Activated CD4-positive, alpha-beta T cell treated with anti-CD3 and anti-CD28 coated beads for 36 hours (primary cell): ENCODE measurements at regions of chr16 and their contacts with region 1.

Region 1: DNA sequence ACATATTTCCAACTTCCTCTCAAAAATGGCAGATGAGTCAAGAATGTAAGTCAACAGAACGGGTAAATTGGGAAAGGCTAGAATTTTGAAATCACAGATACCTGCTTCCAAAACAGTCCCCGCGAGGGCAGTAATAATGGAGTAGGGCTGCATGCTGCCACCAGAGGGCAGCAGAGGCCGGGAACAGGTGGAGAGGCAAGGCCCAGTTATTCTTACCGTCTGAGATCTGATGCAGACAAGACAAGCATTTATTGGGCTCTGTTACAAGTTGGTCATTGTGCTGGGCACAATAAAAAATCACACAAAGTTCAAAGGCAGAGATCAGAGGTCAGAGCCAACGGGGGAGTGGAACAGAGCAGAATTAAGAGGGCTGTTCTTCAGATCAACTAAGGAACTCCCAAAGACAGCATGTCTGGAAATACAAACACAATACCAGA is 8.8 kb upstream of the MLKL start:
- DNase-seq: peak; percentile 90
- ATAC-seq: peak; percentile 99
- H3K4me3 Mint-ChIP-seq: no peak overlapping the region
- H3K27ac Mint-ChIP-seq: no peak overlapping the region
- H3K4me1 Mint-ChIP-seq: peaks cover 6% of the 10 kb centered on the region
- H3K27me3 Mint-ChIP-seq: no peaks in the 10 kb centered on the region

Region 2: DNA sequence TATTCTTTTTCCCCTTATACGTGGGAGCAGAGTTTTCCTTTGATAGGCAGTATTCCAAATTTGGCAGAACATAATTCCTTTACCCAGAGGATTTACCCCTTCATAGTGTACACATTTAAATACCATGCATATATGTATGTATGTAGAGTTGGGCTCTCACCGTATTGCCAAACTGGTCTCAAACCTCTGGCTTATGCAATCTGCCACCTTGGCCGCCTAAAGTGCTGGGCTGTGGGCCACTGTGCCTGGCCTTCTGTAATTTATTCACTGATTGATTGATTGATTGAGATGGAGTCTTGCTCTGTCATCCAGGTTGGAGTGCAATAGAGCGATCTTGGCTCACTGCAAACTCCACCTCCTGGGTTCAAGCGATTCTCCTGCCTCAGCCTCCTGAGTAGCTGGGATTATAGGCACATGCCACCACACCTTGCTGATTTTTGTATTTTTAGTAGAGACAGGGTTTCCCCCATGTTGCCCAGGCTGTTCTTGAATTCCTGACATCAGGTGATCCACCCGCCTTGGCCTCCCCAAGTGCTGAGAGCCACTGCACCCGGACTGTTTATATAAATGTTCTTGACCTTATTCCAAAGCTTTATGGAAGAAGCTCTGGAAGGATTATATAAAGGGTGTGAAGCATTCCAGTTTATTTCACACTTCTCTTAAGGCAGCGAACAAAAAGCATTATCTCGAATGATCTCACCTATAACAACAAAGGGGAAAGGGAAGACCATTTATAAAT is 117.4 kb before region 1 on chr16:
- CTCF ChIA-PET with region 1: no interaction called
- POLR2A ChIA-PET with region 1: no interaction called
- intact Hi-C with region 1: no loop called
- DNase-seq: no peak
- ATAC-seq: no peak
- H3K4me3 Mint-ChIP-seq: no peak overlapping the region
- H3K27ac Mint-ChIP-seq: no peak overlapping the region
- H3K4me1 Mint-ChIP-seq: peaks cover 60% of the 10 kb centered on the region
- H3K27me3 Mint-ChIP-seq: no peaks in the 10 kb centered on the region

Region 3: DNA sequence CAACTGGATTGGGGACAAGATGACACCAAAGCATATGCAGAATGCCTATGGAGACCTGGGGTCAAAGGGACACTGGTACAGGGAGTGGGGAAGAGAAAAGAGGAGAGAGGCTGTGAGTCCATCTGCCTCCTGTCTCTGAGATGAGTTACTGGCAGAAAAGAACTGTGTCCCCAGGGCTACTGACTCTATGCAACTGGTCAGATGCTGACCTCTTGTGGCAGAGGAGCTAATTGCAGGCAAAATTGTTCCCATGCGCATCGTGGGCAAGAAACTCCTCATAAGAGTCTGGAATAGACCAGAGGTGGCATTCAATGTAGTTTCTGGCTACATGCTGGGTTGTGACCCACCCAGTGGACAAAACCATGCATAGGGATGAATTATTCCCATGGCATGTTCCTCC is 17.3 kb after region 1 on chr16:
- CTCF ChIA-PET with region 1: interaction called, 38 read pairs
- POLR2A ChIA-PET with region 1: no interaction called
- intact Hi-C with region 1: loop called (anchors 1 kb)
- DNase-seq: peak; percentile 70
- ATAC-seq: peak; percentile 65
- H3K4me3 Mint-ChIP-seq: no peak overlapping the region
- H3K27ac Mint-ChIP-seq: no peak overlapping the region
- H3K4me1 Mint-ChIP-seq: peaks cover 12% of the 10 kb centered on the region
- H3K27me3 Mint-ChIP-seq: no peaks in the 10 kb centered on the region

Region 4: GRCh38 chr16:74813109-74813641 is 103.7 kb after region 1 on chr16:
- CTCF ChIA-PET with region 1: interaction called, 5 read pairs
- POLR2A ChIA-PET with region 1: no interaction called
- intact Hi-C with region 1: loop called in 1 of 2 experiments (anchors 1 kb)
- DNase-seq: peak; percentile 89
- ATAC-seq: peak; percentile 100
- H3K4me3 Mint-ChIP-seq: no peak overlapping the region
- H3K27ac Mint-ChIP-seq: no peak overlapping the region
- H3K4me1 Mint-ChIP-seq: no peaks in the 10 kb centered on the region
- H3K27me3 Mint-ChIP-seq: no peaks in the 10 kb centered on the region

Region 5: GRCh38 chr16:75385507-75386152 is 676.2 kb after region 1 on chr16:
- CTCF ChIA-PET with region 1: no interaction called
- POLR2A ChIA-PET with region 1: no interaction called
- intact Hi-C with region 1: loop called in 1 of 2 experiments (anchors 1 kb)
- DNase-seq: no peak
- ATAC-seq: peak; percentile 47
- H3K4me3 Mint-ChIP-seq: no peak overlapping the region
- H3K27ac Mint-ChIP-seq: no peak overlapping the region
- H3K4me1 Mint-ChIP-seq: peaks cover 18% of the 10 kb centered on the region
- H3K27me3 Mint-ChIP-seq: peaks cover 2% of the 10 kb centered on the region